H1 (cell line): ENCODE measurements at regions of chr3 and their contacts with region 1.

Region 1: DNA sequence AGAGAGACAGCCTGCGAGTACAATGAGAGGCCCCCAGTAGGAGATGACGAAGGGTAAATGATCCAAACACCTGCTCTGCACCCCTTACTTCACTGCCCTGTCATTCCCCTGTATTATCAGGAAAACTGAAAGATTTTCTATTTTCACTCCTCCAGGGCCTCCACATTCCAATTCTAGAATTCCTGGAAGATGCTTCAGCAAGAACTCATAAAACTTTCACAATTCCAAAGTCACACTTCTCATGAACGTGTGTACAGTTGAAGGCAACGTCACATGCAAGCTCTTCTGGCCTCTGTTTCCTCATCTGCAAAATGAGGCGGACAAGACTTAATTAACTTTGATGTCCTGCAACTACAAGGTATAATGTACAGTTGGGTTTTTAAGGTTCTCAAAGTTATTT is 62.8 kb upstream of the SPATA12 start:
- DNase-seq: no peak
- H3K4me3 ChIP-seq: no peak overlapping the region
- H3K27ac ChIP-seq: no peak overlapping the region
- H3K4me1 ChIP-seq: no peaks in the 10 kb centered on the region
- H3K27me3 ChIP-seq: no peaks in the 10 kb centered on the region
- CTCF ChIP-seq: no peak
- EP300 ChIP-seq: no peak
- POLR2A ChIP-seq: no peak
- RAD21 ChIP-seq: no peak

Region 2: GRCh38 chr3:56980798-56981390 is 16.8 kb before region 1 on chr3:
- CTCF ChIA-PET with region 1: interaction called, 26 read pairs
- POLR2A ChIA-PET with region 1: no interaction called
- DNase-seq: no peak
- H3K4me3 ChIP-seq: no peak overlapping the region
- H3K27ac ChIP-seq: no peak overlapping the region
- H3K4me1 ChIP-seq: peaks cover 0 to 4% (median 0%) of the 10 kb centered on the region in 4 experiments; a peak in 3 of 7 replicates
- H3K27me3 ChIP-seq: no peaks in the 10 kb centered on the region
- CTCF ChIP-seq: no peak
- EP300 ChIP-seq: no peak
- POLR2A ChIP-seq: no peak
- RAD21 ChIP-seq: no peak

Region 3: DNA sequence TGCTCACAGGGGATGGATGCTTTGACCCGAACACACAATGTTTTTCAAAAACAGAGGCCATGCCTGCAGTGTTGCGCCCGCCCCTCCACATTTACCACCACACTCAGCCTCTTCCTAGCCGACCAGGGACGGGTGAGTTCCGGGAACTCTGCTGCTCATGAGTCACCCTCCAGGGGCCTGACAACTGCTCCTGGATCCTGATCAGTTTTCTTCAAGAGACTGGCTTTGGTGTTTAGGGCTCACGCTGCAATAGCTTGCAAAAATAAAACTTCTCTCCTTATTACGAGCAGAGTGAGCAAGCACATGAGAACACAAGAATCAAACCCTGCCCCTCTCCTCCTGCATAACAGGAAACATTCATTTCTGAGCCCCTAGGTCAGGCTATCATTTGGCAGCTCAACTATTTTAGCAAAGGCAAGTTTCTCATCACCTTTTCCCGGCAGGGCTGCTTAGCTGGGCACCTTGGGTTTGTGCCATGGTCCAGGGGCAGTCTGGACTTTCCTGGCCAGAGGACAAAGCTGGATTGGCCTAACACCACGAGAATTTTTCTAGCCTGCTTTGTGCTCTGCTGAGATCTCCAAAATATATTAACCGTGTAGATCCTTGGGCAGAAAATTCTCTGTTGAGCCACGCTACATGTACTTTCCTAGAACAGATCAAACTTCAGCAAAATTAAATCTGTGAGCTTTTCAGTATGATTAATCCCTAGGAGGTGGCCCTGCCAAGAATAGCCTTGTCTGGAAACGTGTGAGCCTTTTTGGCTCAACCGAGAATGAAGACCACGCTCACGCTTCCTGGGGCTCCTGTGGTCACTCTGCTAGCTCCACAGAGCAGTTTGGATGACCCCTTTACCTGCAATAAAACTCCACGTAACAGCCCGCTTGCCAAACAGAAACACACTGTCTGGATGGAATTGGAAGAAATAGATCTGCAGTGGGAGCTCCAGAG is 10.1 kb after region 1 on chr3:
- CTCF ChIA-PET with region 1: interaction called, 63 read pairs
- POLR2A ChIA-PET with region 1: no interaction called
- DNase-seq: no peak
- H3K4me3 ChIP-seq: no peak overlapping the region
- H3K27ac ChIP-seq: no peak overlapping the region
- H3K4me1 ChIP-seq: peaks cover 2 to 8% (median 4%) of the 10 kb centered on the region in 4 experiments; a peak in 3 of 7 replicates
- H3K27me3 ChIP-seq: no peaks in the 10 kb centered on the region
- CTCF ChIP-seq: no peak
- EP300 ChIP-seq: no peak
- POLR2A ChIP-seq: no peak
- RAD21 ChIP-seq: no peak

Region 4: DNA sequence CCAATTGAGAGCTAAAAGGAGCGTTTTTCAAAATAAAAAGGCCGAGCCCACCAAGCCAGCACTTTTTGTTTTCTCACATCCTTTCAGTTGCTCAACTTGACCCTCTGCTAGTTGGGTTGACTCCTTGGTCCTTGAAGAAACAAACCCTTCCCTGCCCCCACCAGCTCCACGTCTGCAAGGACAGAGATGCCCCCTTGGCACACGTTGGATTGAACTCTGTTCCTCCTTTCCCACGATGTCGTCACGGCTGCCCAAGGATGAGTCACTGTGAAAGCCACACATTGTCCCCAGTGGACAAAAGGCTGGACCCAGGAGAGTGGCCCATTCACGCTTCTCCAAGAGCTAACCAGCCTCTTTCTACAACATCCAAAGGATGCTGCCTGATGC is 19.8 kb after region 1 on chr3:
- CTCF ChIA-PET with region 1: interaction called, 14 read pairs
- POLR2A ChIA-PET with region 1: no interaction called
- DNase-seq: no peak
- H3K4me3 ChIP-seq: no peak overlapping the region
- H3K27ac ChIP-seq: no peak overlapping the region
- H3K4me1 ChIP-seq: peaks cover 10 to 13% (median 11%) of the 10 kb centered on the region in 4 experiments
- H3K27me3 ChIP-seq: no peaks in the 10 kb centered on the region
- CTCF ChIP-seq: no peak
- EP300 ChIP-seq: no peak
- POLR2A ChIP-seq: no peak
- RAD21 ChIP-seq: no peak

Region 5: DNA sequence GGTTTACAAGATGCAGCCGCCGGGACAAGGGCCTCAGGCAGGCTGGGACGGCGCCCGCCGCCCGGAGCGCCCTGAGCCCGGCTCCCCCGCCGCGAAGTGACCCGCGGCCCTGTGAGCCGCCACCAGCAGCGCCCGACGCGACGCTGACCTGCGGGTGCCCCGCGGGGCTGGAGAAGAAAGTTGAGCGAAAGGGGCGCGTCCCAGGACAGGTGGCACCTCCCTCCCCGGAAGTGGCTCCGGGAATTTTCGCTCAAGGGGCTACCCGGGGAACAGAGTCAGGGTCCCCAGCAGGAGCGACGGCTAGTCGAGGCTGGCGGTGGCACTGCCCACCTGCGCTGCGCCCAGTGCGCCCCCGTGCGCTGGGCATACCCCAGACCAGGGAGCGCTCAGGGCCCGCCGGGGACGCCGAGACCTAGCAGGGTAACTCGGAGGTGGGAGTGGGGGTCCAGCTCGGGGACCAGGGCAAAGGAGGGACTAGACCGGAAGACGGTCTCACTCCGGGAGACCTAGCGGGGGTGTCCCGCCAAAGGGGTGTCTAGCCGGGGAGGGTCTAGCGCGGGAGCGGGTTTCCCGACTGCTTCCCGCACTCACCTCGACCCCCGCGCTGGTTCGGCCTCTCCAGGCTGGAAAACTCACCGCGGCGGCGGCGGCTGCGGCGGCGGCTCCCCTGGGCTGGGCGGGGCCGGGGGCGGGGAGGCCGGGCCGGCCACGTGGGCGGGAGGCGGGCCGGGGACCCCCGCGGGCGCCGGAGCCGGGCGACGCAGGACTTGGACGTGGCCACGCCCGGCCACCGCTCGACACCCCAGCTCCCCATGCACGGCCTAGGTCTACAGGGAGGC is 81.2 kb after region 1 on chr3:
- CTCF ChIA-PET with region 1: interaction called, 14 read pairs
- POLR2A ChIA-PET with region 1: interaction called, 3 read pairs
- DNase-seq: peak in 1 of 2 experiments; percentile 89
- H3K4me3 ChIP-seq: peak overlapping the region; percentile 58 to 96 (median 82)
- H3K27ac ChIP-seq: no peak overlapping the region
- H3K4me1 ChIP-seq: peaks cover 4 to 7% (median 5%) of the 10 kb centered on the region in 4 experiments; a peak in 5 of 7 replicates
- H3K27me3 ChIP-seq: peaks cover 0 to 34% (median 27%) of the 10 kb centered on the region in 4 experiments; a peak in 6 of 7 replicates
- CTCF ChIP-seq: peak; percentile 11 to 26 (median 14)
- EP300 ChIP-seq: no peak
- POLR2A ChIP-seq: peak in 1 of 2 experiments; percentile 32; a peak in 1 of 3 replicates
- RAD21 ChIP-seq: peak in 1 of 2 experiments; percentile 21; a peak in 1 of 4 replicates

Region 6: DNA sequence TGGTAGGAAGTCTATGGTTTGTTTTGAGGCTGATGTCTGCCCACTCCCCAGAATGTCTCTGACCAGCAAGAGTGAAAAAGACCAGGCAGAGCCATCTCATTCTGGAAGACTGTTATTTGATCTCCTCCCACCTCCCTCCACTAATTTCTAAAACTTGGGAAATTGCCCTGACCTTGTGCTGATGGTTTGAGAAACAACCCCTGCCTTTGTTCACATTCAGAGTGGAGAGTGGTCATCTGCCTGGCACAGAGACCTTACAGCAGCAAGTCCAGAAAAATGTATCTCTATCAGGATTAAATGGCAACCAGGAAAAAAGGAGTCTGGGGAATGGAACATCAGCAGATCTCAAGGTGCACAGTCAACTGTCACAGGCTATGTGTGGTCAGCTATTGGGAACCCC is 88.5 kb after region 1 on chr3:
- CTCF ChIA-PET with region 1: interaction called, 16 read pairs
- POLR2A ChIA-PET with region 1: no interaction called
- DNase-seq: no peak
- H3K4me3 ChIP-seq: no peak overlapping the region
- H3K27ac ChIP-seq: no peak overlapping the region
- H3K4me1 ChIP-seq: no peaks in the 10 kb centered on the region; a peak in 2 of 7 replicates
- H3K27me3 ChIP-seq: no peaks in the 10 kb centered on the region
- CTCF ChIP-seq: no peak
- EP300 ChIP-seq: no peak
- POLR2A ChIP-seq: no peak
- RAD21 ChIP-seq: no peak